ENCODE measurements at regions of chr2 and their contacts with region 1.

Region 1: DNA sequence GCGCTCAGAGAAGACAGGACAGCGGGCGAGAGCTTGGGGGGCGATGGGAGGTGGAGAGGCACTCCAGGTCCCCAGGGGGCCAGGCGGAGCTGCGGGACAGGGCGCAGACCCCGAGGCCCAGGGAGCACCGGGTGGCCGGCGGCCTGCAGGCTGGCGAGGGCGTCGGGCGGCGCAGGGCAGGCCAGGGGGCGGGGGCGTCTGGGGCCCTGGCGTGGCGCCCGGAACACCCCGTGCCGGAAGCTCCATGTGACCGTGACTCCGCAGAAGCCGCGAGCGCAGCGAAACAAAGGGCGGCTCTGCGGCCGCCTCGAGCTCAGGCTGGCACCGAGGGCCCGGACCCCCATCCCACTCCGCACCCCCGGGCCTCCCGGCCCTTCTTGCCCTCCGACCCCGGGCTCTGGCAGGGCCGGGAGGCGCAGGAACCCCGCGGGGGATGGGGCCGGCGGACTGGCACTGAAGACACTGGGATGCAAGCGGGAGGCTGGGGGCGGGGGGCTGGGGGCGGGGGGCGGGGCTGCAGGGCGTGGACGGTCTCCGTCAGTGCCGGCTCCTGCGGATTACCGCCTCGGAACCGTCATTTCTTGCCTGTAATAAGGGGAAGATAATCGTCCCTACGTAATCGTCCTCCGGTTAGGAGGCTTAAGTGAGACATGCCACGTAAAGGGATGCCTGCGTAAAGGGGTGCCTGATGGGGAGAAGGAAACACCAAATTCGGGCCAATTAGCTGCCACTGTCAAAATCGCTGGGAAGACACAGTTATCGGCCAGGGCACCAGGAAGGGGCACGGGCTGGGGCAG is 19.2 kb downstream of the SH2D6 start:
- DNase-seq: peak; percentile 77 to 85
- ATAC-seq: peak; percentile 55 to 60
- H3K4me3 ChIP-seq: peak overlapping the region; percentile 38 to 54 (median 51)
- H3K27ac ChIP-seq: peak overlapping the region; percentile 85 to 98 (median 96)
- H3K4me1 ChIP-seq: peaks cover 25 to 52% of the 10 kb centered on the region in 2 donors
- H3K27me3 ChIP-seq: no peaks in the 10 kb centered on the region
- CTCF ChIP-seq: peak in 1 of 5 experiments; percentile 19
- POLR2A ChIP-seq: peak; percentile 82 to 92

Region 2: GRCh38 chr2:85215448-85216401 is 222.0 kb before region 1 on chr2:
- in situ Hi-C with region 1: no loop called
- intact Hi-C with region 1: no loop called
- DNase-seq: no peak
- ATAC-seq: no peak
- H3K4me3 ChIP-seq: no peak overlapping the region
- H3K27ac ChIP-seq: peak overlapping the region; percentile 30 to 79 (median 71)
- H3K4me1 ChIP-seq: peaks cover 43 to 47% of the 10 kb centered on the region in 2 donors
- H3K27me3 ChIP-seq: no peaks in the 10 kb centered on the region
- CTCF ChIP-seq: no peak
- POLR2A ChIP-seq: no peak

Region 3: DNA sequence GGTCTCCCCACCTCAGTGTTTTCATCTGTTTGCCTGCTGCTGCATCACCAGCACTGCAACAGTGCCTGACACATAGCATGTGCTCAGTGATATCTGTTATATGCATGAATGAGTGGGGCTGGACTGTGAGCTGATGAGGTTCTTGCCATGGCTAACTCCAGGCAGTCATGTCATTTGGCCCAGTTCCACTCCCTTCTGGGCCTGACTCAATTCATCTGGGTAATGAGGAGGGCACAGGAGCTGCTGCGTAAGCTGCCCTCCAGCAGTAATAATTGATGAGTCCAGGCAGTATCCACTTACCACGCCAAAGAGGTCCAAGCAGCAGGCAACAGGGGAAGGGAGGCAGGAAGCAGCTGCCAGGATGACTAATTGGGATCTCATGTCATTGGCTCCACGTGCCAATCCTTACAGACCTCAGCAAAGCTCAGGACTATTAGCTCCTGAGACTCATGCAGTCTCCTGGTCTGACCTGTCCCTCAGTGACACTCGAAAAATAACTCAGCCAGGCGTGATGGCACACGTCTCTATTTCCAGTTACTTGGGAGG is 67.2 kb after region 1 on chr2:
- in situ Hi-C with region 1: no loop called
- intact Hi-C with region 1: loop called (anchors 1 kb)
- DNase-seq: peak; percentile 89 to 92
- ATAC-seq: peak; percentile 94 to 95
- H3K4me3 ChIP-seq: no peak overlapping the region
- H3K27ac ChIP-seq: peak overlapping the region; percentile 74 to 90 (median 81)
- H3K4me1 ChIP-seq: peaks cover 19 to 34% of the 10 kb centered on the region in 2 donors
- H3K27me3 ChIP-seq: no peaks in the 10 kb centered on the region
- CTCF ChIP-seq: no peak
- POLR2A ChIP-seq: no peak

Region 4: DNA sequence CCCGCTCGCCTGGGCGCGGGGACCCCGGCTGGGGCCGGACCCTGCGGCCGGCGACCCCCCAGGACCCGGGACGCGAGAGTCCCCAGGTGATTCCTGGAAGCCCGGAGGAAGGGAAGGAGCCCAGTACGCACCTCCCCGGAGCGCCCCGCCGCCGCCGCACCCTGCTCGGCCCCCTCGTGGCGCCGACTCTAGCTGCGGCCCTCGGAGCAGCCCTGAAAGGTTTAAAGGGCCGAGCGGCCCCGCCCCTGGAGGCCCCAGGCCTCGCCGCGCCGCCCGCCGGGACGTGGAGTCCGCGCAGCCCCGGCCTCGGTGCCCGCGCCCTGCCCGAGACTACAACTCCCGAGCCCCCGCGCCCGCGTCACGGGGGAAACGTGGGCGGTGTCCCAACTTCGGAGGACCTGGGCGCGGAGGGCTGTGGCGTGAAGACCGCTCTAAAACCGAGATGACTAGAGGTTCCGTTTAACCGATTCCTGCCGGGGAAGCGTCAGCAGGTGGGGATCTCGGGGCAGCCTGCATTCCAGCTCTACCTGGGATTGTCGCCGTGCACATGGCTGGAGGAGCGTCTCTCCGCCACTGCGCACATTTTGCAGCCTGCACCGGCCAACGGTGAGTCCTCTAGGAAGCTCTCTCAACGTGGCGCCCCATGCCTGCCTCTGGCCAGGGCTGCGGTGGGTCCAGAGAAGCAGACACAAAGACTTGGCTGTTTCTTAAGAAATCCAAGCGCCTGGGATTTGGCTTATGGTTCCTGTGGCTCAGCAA is 165.0 kb after region 1 on chr2 and contains the start of gene TMEM150A:
- in situ Hi-C with region 1: no loop called
- intact Hi-C with region 1: loop called (anchors 5 kb)
- DNase-seq: peak; percentile 92 to 95
- ATAC-seq: peak; percentile 51 to 60
- H3K4me3 ChIP-seq: peak within 1 kb of the TSS; percentile 74 to 84 (median 84)
- H3K27ac ChIP-seq: peak within 1 kb of the TSS; percentile 93 to 99 (median 94)
- H3K4me1 ChIP-seq: peaks cover 58 to 60% of the 10 kb centered on the region in 2 donors
- H3K27me3 ChIP-seq: no peaks in the 10 kb centered on the region
- CTCF ChIP-seq: peak in 4 of 5 experiments; percentile 68 to 75 (median 71)
- POLR2A ChIP-seq: peak; percentile 98 to 99
- total RNA-seq, gene TMEM150A: 44.4 to 102 (median 80.7) TPM

Measured in gastrocnemius medialis (tissue), 4 donors.